Activated naive CD4-positive, alpha-beta T cell treated with anti-CD3 and anti-CD28 coated beads for 36 hours (primary cell): ENCODE measurements at regions of chr2 and their contacts with region 1.

Region 1: GRCh38 chr2:119641562-119642258 is 37.3 kb upstream of the TMEM177 start:
- DNase-seq: peak; percentile 84
- H3K4me3 Mint-ChIP-seq: no peak overlapping the region
- H3K27ac Mint-ChIP-seq: no peak overlapping the region
- H3K4me1 Mint-ChIP-seq: peaks cover 1% of the 10 kb centered on the region
- H3K27me3 Mint-ChIP-seq: no peaks in the 10 kb centered on the region

Region 2: GRCh38 chr2:119517433-119517832 is 124.3 kb before region 1 on chr2:
- CTCF ChIA-PET with region 1: no interaction called
- intact Hi-C with region 1: loop called (anchors 10 kb)
- DNase-seq: peak; percentile 60
- H3K4me3 Mint-ChIP-seq: no peak overlapping the region
- H3K27ac Mint-ChIP-seq: no peak overlapping the region
- H3K4me1 Mint-ChIP-seq: no peaks in the 10 kb centered on the region
- H3K27me3 Mint-ChIP-seq: peaks cover 25% of the 10 kb centered on the region

Region 3: DNA sequence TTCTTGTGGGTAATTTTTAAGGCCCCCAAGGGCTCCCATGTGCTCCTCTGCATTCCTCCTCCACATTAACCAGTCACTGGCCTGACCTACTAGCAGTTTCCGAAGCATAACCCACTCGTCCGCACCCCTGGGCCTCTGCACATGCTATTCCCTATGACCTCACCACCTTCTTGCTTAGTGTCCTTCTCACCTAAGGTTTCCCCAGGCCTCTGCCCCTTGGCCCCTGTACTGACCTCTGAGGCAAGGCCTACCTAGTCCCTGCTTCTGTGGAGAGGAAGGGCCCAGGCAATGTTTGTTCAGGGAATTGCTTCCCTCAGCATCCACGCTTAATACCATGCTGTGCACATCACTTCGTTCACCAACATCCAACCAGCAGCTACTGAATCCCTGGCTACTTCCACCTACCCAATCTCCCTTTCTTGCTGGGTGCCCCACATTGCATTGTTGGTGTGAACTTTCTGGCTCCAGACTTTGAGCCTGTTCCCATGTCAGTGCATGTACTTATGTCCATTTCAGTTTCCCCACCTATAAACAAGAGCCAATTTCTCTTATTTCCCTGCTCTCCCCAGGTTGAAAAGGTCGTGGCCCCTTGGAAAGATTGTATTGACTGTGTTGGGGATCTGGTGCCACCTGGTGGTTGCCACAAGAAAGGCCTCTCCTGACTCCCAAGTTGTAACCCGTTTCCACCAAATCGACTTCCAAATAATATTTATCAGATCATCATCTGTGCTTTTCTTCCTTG is 18.1 kb after region 1 on chr2:
- CTCF ChIA-PET with region 1: interaction called, 80 read pairs
- intact Hi-C with region 1: loop called (anchors 1 kb)
- DNase-seq: peak; percentile 56
- H3K4me3 Mint-ChIP-seq: no peak overlapping the region
- H3K27ac Mint-ChIP-seq: no peak overlapping the region
- H3K4me1 Mint-ChIP-seq: no peaks in the 10 kb centered on the region
- H3K27me3 Mint-ChIP-seq: no peaks in the 10 kb centered on the region

Region 4: GRCh38 chr2:119678998-119679710 is 37.4 kb after region 1 on chr2 and contains the start of gene TMEM177:
- CTCF ChIA-PET with region 1: interaction called, 4 read pairs
- intact Hi-C with region 1: loop called (anchors 1 kb)
- DNase-seq: peak; percentile 89
- H3K4me3 Mint-ChIP-seq: peak within 1 kb of the TSS; percentile 81
- H3K27ac Mint-ChIP-seq: peak within 1 kb of the TSS; percentile 62
- H3K4me1 Mint-ChIP-seq: peaks cover 41% of the 10 kb centered on the region
- H3K27me3 Mint-ChIP-seq: no peaks in the 10 kb centered on the region
- total RNA-seq, gene TMEM177: 11.9 to 13.3 TPM

Region 5: GRCh38 chr2:119702918-119703401 is 61.2 kb after region 1 on chr2:
- CTCF ChIA-PET with region 1: interaction called, 4 read pairs
- intact Hi-C with region 1: loop called (anchors 2 kb)
- DNase-seq: peak; percentile 74
- H3K4me3 Mint-ChIP-seq: no peak overlapping the region
- H3K27ac Mint-ChIP-seq: no peak overlapping the region
- H3K4me1 Mint-ChIP-seq: peaks cover 16% of the 10 kb centered on the region
- H3K27me3 Mint-ChIP-seq: no peaks in the 10 kb centered on the region

Region 6: GRCh38 chr2:119721462-119721861 is 79.8 kb after region 1 on chr2:
- CTCF ChIA-PET with region 1: no interaction called
- intact Hi-C with region 1: no loop called
- DNase-seq: no peak
- H3K4me3 Mint-ChIP-seq: no peak overlapping the region
- H3K27ac Mint-ChIP-seq: no peak overlapping the region
- H3K4me1 Mint-ChIP-seq: no peaks in the 10 kb centered on the region
- H3K27me3 Mint-ChIP-seq: no peaks in the 10 kb centered on the region

Region 7: DNA sequence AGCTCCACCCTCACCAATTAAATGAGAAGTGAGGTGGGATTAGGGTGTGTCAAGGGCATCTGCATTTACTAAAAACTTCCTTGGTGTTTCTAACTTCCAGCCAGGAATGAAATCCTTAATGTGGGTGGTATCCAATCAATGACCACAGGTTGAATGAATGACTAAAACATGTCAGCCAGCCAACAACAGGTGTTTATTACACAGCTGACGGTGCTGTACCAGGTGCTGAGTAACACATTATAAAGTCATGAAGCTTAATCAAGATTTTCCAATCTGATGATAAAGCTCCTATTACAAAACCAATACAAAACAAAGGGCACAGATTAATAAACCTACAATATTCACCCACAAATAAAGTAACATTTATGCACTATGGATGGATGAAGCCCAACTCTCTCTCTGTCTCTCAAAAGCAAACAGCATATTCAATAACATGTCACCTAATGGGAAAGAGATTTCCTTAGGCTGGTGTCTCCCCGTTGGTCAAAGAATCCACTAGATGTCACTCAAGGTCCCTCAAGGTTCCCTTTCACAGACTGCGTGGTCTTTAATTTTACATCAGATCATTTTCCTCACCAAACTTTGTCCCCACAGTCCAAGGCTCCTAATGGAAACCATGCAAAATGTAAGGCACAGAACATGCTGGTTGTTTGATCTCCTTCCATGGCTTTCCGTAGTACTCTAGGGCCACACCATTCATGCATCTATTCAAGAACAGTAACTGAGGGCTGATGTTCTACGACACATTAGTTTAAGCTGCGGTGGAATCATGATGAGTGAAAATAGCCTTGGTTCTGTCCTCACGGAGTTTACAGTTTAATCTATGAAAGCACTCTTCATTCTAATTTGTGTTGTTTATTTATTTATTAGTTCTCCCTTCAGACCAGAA is 111.6 kb after region 1 on chr2:
- CTCF ChIA-PET with region 1: no interaction called
- intact Hi-C with region 1: loop called (anchors 1 kb)
- DNase-seq: peak; percentile 43
- H3K4me3 Mint-ChIP-seq: no peak overlapping the region
- H3K27ac Mint-ChIP-seq: no peak overlapping the region
- H3K4me1 Mint-ChIP-seq: peaks cover 14% of the 10 kb centered on the region
- H3K27me3 Mint-ChIP-seq: no peaks in the 10 kb centered on the region

Region 8: DNA sequence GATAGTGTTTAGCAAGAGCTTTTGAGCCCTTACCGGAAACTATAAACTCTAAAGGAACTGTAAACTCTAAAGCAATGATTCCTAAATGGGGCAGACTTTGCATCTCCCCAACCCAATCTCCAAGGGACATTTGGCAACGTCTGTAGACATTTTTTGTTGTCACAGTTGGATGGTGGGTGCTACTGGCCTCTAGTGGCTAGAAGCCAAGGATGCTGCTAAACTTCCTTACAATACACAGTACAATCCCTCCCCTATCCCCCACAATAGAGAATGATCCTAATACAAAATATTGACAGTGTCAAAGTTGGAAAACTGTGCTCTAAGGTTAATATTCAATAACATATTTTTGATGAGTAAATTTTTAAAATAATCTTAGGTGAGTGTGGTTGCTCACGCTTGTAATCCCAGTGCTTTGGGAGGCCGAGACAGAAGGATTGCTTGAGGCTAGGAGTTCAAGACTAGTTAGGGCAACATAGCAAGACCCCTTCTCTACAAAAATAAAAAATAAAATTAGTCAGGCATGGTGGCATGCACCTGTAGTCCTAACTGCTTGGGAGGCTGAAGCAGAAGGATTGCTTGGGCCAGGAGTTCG is 184.8 kb after region 1 on chr2:
- CTCF ChIA-PET with region 1: interaction called, 4 read pairs
- intact Hi-C with region 1: loop called (anchors 1 kb)
- DNase-seq: peak; percentile 58
- H3K4me3 Mint-ChIP-seq: no peak overlapping the region
- H3K27ac Mint-ChIP-seq: no peak overlapping the region
- H3K4me1 Mint-ChIP-seq: peaks cover 43% of the 10 kb centered on the region
- H3K27me3 Mint-ChIP-seq: no peaks in the 10 kb centered on the region